Activated naive CD4-positive, alpha-beta T cell treated with anti-CD3 and anti-CD28 coated beads, Interleukin-2, amount 10 ng/mL, durations not matched to agents 7 days and 5 days (primary cell): ENCODE measurements at regions of chr4 and their contacts with region 1.

Region 1: GRCh38 chr4:8403173-8403753 is 37.3 kb downstream of the ACOX3 start:
- DNase-seq: peak; percentile 63
- H3K4me3 Mint-ChIP-seq: no peak overlapping the region
- H3K27ac Mint-ChIP-seq: no peak overlapping the region
- H3K4me1 Mint-ChIP-seq: no peaks in the 10 kb centered on the region
- H3K27me3 Mint-ChIP-seq: no peaks in the 10 kb centered on the region

Region 2: DNA sequence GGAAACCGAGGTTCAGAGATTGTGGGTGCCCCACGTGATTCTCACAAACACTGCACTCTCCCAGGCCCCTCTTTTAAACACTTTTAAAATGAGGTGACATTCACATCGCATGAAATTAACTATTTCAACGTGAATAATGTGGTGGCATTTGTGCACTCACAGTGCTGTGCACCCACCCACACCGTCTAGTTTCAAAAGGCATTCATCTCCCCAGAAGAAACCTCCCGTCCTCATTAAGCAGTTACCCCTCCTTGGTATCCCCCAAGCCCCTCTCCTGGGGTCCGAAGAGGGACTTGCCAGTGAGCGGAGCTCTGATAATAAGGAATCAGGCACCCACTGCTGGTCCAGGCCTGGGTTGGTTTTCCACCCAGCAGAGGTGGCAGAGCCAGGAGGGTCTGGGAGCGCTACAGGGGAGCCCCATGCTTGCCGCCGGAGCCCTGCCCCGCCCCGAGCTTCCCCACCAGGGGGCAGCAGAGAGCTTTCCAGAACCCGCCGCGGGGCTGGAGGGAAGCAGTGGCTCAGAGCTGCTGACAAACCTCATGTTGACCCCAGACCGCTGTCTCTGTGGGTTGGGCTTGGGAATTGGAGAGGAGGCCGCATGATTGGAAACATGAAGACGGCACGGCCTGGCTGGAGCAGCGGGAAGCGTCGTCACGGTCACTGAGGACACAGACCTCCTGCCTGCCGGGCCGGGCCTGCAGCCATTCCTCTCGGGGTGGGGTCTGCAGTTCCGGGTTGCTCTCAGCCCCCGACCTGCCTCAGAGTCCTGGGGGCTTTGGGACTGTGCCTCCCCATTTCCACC is 161.2 kb before region 1 on chr4:
- CTCF ChIA-PET with region 1: interaction called, 25 read pairs
- DNase-seq: peak; percentile 80
- H3K4me3 Mint-ChIP-seq: no peak overlapping the region
- H3K27ac Mint-ChIP-seq: no peak overlapping the region
- H3K4me1 Mint-ChIP-seq: no peaks in the 10 kb centered on the region
- H3K27me3 Mint-ChIP-seq: no peaks in the 10 kb centered on the region

Region 3: GRCh38 chr4:8267077-8267476 is 136.2 kb before region 1 on chr4:
- CTCF ChIA-PET with region 1: interaction called, 24 read pairs
- DNase-seq: peak; percentile 48
- H3K4me3 Mint-ChIP-seq: no peak overlapping the region
- H3K27ac Mint-ChIP-seq: no peak overlapping the region
- H3K4me1 Mint-ChIP-seq: no peaks in the 10 kb centered on the region
- H3K27me3 Mint-ChIP-seq: peaks cover 51% of the 10 kb centered on the region